CD4-positive, alpha-beta T cell (primary cell): ENCODE measurements at regions of chr7 and their contacts with region 1.

Region 1: GRCh38 chr7:4725014-4725849 is 43.1 kb downstream of the FOXK1 start:
- DNase-seq: peak in 10 of 14 experiments; percentile 22 to 77 (median 46)
- ATAC-seq: peak; percentile 83
- H3K4me3 ChIP-seq: peak overlapping the region; percentile 66
- H3K4me3 Mint-ChIP-seq: peak overlapping the region; percentile 93
- H3K27ac ChIP-seq: peak overlapping the region; percentile 48 to 54
- H3K27ac Mint-ChIP-seq: peak overlapping the region; percentile 94
- H3K4me1 ChIP-seq: peaks cover 31% of the 10 kb centered on the region
- H3K4me1 Mint-ChIP-seq: peaks cover 44% of the 10 kb centered on the region
- H3K27me3 ChIP-seq: no peaks in the 10 kb centered on the region
- H3K27me3 Mint-ChIP-seq: no peaks in the 10 kb centered on the region
- CTCF ChIP-seq: no peak

Region 2: DNA sequence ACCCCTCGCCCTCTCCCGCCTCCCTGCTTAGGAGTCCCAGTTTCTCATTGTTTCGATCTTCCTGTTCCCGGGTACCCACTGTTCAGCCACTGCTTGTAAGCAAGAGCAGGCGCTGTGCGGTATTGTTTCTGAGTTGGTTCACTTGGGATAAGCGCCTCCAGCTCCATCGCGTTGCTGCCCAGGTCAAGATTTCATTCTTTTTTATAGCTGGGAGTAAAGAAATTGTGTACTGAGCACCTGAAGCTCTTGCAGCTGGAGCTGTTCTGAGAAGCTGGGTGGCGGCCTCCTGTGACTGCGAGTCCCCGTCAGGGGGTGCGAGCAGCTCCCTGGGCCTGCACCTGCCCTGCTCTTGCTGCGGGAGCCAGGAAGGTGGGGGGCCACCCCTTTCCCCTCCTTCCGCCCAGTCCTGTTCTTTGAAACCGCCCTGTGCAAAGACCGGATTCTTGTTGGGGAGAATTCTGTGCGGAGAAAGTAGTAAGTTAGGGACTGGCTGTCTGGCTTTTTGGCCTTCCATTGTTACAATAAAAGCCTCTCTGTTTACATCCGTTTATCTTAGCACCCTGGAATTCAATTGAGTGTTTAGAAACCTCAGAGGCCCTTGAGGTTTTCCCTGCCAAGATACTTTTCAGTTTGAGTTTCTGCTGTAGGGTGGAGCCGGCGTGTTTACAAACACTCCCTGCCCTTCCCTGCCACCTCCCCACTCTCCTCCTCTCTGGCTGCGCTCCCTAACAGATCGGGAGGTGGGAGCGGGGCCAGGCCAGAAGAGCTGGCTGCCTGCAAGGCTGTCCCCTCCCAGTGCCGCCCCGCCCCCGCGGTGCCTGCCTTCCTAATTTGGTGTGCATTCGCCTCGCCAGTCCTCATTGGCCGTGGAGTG is 19.4 kb after region 1 on chr7:
- CTCF ChIA-PET with region 1: interaction called, 4 read pairs
- POLR2A ChIA-PET with region 1: interaction called, 14 read pairs
- intact Hi-C with region 1: no loop called
- DNase-seq: peak; percentile 39 to 84 (median 73)
- ATAC-seq: peak; percentile 73
- H3K4me3 ChIP-seq: peak overlapping the region; percentile 58
- H3K4me3 Mint-ChIP-seq: peak overlapping the region; percentile 90
- H3K27ac ChIP-seq: peak overlapping the region; percentile 68 to 94
- H3K27ac Mint-ChIP-seq: peak overlapping the region; percentile 93
- H3K4me1 ChIP-seq: peaks cover 69% of the 10 kb centered on the region
- H3K4me1 Mint-ChIP-seq: peaks cover 81% of the 10 kb centered on the region
- H3K27me3 ChIP-seq: no peaks in the 10 kb centered on the region
- H3K27me3 Mint-ChIP-seq: no peaks in the 10 kb centered on the region
- CTCF ChIP-seq: no peak